Activated B cell treated with CpG ODN at 0.5 μM for 24 hours (primary cell): ENCODE measurements at regions of chr19 and their contacts with region 1.

Region 1: GRCh38 chr19:44071824-44072542 is at the start of gene ZNF284:
- DNase-seq: peak; percentile 67
- ATAC-seq: peak; percentile 100
- H3K4me3 Mint-ChIP-seq: peak within 1 kb of the TSS; percentile 94
- H3K27ac Mint-ChIP-seq: peak within 1 kb of the TSS; percentile 80
- H3K4me1 Mint-ChIP-seq: peaks cover 26% of the 10 kb centered on the region
- H3K27me3 Mint-ChIP-seq: peaks cover 1% of the 10 kb centered on the region
- CTCF ChIP-seq: no peak
- total RNA-seq, gene ZNF284: 2.1 and 2.3 TPM in 2 replicates

Region 2: GRCh38 chr19:43855616-43856015 is 216.4 kb before region 1 on chr19:
- CTCF ChIA-PET with region 1: no interaction called
- POLR2A ChIA-PET with region 1: no interaction called
- intact Hi-C with region 1: no loop called
- DNase-seq: no peak
- ATAC-seq: no peak
- H3K4me3 Mint-ChIP-seq: no peak overlapping the region
- H3K27ac Mint-ChIP-seq: no peak overlapping the region
- H3K4me1 Mint-ChIP-seq: no peaks in the 10 kb centered on the region
- H3K27me3 Mint-ChIP-seq: no peaks in the 10 kb centered on the region
- CTCF ChIP-seq: no peak

Region 3: GRCh38 chr19:43901395-43902390 is 170.3 kb before region 1 on chr19:
- CTCF ChIA-PET with region 1: no interaction called
- POLR2A ChIA-PET with region 1: no interaction called
- intact Hi-C with region 1: no loop called
- DNase-seq: peak; percentile 62
- ATAC-seq: peak; percentile 96
- H3K4me3 Mint-ChIP-seq: peak overlapping the region; percentile 93
- H3K27ac Mint-ChIP-seq: peak overlapping the region; percentile 82
- H3K4me1 Mint-ChIP-seq: peaks cover 18% of the 10 kb centered on the region
- H3K27me3 Mint-ChIP-seq: no peaks in the 10 kb centered on the region
- CTCF ChIP-seq: no peak

Region 4: DNA sequence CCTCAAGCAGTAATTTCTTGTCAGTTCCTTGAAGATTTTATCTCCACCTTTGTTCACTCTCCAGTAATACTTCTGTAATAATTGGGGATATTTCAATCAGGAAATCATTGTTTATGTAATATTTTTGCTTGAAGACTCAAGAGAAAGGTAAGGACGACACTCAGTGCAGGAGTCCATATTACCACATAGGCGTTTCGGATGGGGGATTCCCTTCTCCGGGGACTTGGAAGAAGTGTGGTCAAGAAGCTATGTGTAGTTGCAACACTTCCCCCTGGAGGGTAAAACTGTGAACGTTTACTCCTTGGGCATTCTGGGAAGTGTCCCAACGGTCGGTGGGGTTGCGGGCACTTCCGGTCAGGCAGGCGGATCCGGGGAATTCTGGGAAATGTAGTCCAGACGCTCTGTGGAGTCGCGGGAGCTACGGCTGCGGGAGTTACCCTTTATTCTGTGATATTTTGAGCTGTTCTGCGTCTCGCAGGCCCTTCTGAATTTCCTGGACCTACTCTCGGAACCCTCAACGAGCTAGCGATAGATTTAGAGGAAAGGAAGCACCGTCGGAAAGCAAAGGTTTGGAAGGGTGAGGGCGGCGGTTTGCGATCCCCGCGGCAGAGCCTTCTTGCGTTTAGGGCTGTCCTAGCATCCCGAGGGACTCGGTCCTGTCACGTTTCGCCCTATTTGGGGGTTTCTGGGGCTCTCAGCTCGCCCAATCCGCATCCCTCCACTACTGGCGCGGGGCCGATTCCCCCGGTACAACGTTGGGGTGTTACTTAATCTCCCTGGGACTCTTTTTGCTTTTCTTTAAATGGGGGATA is 120.9 kb before region 1 on chr19 and contains the start of gene ZNF221:
- CTCF ChIA-PET with region 1: no interaction called
- POLR2A ChIA-PET with region 1: no interaction called
- intact Hi-C with region 1: no loop called
- DNase-seq: peak; percentile 52
- ATAC-seq: peak; percentile 91
- H3K4me3 Mint-ChIP-seq: peak within 1 kb of the TSS; percentile 98
- H3K27ac Mint-ChIP-seq: peak within 1 kb of the TSS; percentile 82
- H3K4me1 Mint-ChIP-seq: peaks cover 10% of the 10 kb centered on the region
- H3K27me3 Mint-ChIP-seq: peaks cover 11% of the 10 kb centered on the region
- CTCF ChIP-seq: no peak
- total RNA-seq, gene ZNF221: 2.6 TPM in 2 replicates

Region 5: DNA sequence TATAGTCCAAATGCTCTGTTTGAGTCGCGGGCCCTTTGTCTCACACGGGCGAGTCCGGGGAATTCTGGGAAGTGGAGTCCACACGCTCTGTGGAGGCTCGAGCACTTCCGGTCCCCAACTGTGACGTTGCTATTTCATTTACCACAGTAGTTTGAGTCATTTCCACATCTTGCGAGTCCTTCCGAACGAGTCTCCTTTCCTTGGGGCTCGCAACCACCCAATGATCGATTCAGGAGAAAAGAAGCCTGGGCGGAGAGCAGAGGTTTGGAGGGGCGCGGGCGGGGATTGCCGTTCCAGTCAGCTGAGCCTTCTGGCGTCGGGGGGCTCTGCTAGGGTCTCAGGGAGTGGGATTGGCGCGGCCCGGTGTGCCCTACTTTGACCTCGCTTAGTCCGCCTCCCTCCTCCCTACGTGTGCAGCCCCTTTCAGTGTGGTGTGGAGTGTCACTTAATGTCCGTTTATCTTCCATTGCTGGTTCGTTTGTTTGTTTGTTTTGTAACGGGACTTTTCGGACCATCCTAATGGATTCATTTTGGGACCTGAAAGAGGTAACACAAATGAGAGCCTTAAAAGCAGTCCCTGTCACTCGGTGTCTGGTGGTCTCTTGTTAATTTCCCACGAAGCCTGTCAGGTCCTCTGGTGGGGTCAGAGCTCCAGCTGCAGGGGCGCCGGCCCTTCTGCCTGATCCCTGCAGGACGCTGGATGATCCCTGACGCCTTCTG is 46.6 kb before region 1 on chr19 and contains the start of gene ZNF222:
- CTCF ChIA-PET with region 1: no interaction called
- POLR2A ChIA-PET with region 1: no interaction called
- intact Hi-C with region 1: loop called (anchors 1 kb)
- DNase-seq: peak; percentile 57
- ATAC-seq: peak; percentile 99
- H3K4me3 Mint-ChIP-seq: peak within 1 kb of the TSS; percentile 98
- H3K27ac Mint-ChIP-seq: peak within 1 kb of the TSS; percentile 85
- H3K4me1 Mint-ChIP-seq: peaks cover 18% of the 10 kb centered on the region
- H3K27me3 Mint-ChIP-seq: peaks cover 6% of the 10 kb centered on the region
- CTCF ChIP-seq: no peak
- total RNA-seq, gene ZNF222: 6.0 and 6.7 TPM in 2 replicates

Region 6: DNA sequence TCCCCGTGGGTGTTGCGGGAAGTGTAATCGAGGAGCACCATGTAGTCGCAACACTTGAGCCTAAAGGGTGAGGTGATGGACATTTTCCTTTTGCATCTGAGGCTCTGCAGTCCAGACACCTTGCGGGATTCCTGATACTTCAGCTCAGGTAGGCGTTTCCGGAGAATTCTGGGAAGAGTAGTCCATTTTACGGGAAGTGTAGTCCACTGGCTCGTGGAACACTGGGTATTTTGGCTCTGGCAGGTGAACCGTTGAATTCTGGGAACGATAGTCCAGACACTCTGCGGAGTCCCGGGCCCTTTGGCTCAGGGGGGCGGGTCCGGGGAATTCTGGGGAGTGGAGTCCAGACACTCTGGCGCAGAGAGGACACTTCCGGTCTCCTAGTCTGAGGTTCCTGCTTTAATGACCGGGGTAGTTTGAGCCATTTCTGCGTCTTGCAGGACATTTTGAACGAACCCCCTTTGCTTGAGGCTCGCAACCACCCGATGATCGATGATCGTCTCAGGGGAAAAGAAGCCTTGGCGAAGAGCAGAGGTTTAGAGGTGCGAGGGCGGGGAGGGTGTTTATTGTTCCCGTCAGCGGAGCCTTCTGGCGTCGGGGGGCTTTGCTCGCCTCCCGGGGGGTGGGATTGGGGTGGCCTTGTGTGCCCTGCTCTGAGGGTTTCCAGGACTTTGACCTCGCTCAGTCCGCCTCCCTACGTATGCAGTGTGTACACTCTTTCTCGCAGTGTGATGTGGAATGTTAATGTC is 20.2 kb before region 1 on chr19 and contains the start of gene ZNF223:
- CTCF ChIA-PET with region 1: no interaction called
- POLR2A ChIA-PET with region 1: interaction called, 3 read pairs
- intact Hi-C with region 1: loop called (anchors 1 kb)
- DNase-seq: peak; percentile 37
- ATAC-seq: peak; percentile 86
- H3K4me3 Mint-ChIP-seq: peak within 1 kb of the TSS; percentile 94
- H3K27ac Mint-ChIP-seq: peak within 1 kb of the TSS; percentile 36
- H3K4me1 Mint-ChIP-seq: peaks cover 29% of the 10 kb centered on the region
- H3K27me3 Mint-ChIP-seq: peaks cover 11% of the 10 kb centered on the region
- CTCF ChIP-seq: no peak
- total RNA-seq, gene ZNF223: 3.6 and 4.5 TPM in 2 replicates